ENCODE measurements at regions of chr16 and their contacts with region 1.

Region 1: GRCh38 chr16:69626256-69626655 is 60.5 kb downstream of the NFAT5 start:
- DNase-seq: no peak
- H3K4me3 ChIP-seq: no peak overlapping the region
- H3K27ac ChIP-seq: no peak overlapping the region
- H3K4me1 ChIP-seq: peaks cover 12% of the 10 kb centered on the region
- H3K27me3 ChIP-seq: no peaks in the 10 kb centered on the region
- CTCF ChIP-seq: no peak

Region 2: GRCh38 chr16:68636064-68636560 is 990.1 kb before region 1 on chr16:
- intact Hi-C with region 1: no loop called
- DNase-seq: no peak
- H3K4me3 ChIP-seq: no peak overlapping the region
- H3K27ac ChIP-seq: no peak overlapping the region
- H3K4me1 ChIP-seq: no peaks in the 10 kb centered on the region
- H3K27me3 ChIP-seq: peaks cover 27% of the 10 kb centered on the region
- CTCF ChIP-seq: no peak

Region 3: DNA sequence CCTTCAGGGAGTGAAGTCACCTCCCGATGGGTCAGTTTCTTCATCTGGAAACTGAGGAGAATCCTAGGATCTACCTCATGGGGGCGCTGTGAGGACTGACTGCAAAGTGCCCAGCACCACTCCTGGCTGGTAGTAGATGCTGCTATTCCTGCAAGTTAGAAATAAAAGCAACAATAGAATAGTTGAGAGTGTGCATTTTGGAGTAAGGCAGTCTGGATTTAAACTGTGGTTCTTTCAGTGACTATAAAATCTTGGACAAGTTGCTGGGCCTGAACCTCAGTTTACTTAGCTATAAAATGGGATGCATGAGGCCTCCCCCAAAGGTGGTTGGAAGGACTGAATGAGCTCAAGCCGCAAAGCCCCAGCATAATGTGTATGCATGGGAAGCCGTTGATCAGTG is 131.3 kb before region 1 on chr16:
- intact Hi-C with region 1: loop called (anchors 10 kb)
- DNase-seq: no peak
- H3K4me3 ChIP-seq: no peak overlapping the region
- H3K27ac ChIP-seq: peak overlapping the region; percentile 77
- H3K4me1 ChIP-seq: peaks cover 7% of the 10 kb centered on the region
- H3K27me3 ChIP-seq: no peaks in the 10 kb centered on the region
- CTCF ChIP-seq: peak; percentile 31

Region 4: DNA sequence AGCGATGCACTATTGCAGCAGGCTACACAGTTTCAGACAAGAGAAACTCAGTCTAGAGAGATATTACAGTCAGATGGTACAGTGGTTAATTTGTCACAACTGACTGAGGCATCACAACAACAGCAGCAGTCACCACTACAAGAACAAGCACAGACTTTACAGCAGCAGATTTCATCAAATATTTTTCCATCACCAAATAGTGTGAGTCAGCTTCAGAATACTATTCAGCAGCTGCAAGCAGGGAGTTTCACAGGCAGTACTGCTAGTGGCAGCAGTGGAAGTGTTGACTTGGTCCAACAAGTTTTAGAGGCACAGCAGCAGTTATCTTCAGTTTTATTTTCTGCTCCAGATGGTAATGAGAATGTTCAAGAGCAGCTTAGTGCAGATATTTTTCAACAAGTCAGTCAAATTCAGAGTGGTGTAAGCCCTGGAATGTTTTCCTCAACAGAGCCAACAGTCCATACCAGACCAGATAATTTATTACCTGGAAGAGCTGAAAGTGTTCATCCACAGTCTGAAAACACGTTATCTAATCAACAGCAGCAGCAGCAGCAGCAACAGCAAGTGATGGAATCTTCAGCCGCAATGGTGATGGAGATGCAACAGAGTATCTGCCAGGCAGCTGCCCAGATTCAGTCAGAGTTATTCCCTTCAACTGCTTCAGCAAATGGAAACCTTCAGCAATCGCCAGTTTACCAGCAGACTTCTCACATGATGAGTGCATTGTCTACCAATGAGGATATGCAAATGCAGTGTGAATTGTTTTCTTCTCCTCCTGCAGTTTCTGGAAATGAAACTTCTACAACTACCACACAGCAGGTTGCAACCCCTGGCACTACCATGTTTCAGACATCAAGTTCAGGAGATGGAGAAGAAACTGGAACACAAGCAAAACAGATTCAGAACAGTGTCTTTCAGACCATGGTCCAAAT is 66.0 kb after region 1 on chr16:
- intact Hi-C with region 1: no loop called
- DNase-seq: no peak
- H3K4me3 ChIP-seq: no peak overlapping the region
- H3K27ac ChIP-seq: no peak overlapping the region
- H3K4me1 ChIP-seq: no peaks in the 10 kb centered on the region
- H3K27me3 ChIP-seq: no peaks in the 10 kb centered on the region
- CTCF ChIP-seq: no peak

Measured in left ventricle myocardium inferior (tissue), 1 donor.